ENCODE measurements at regions of chr3 and their contacts with region 1.

Region 1: DNA sequence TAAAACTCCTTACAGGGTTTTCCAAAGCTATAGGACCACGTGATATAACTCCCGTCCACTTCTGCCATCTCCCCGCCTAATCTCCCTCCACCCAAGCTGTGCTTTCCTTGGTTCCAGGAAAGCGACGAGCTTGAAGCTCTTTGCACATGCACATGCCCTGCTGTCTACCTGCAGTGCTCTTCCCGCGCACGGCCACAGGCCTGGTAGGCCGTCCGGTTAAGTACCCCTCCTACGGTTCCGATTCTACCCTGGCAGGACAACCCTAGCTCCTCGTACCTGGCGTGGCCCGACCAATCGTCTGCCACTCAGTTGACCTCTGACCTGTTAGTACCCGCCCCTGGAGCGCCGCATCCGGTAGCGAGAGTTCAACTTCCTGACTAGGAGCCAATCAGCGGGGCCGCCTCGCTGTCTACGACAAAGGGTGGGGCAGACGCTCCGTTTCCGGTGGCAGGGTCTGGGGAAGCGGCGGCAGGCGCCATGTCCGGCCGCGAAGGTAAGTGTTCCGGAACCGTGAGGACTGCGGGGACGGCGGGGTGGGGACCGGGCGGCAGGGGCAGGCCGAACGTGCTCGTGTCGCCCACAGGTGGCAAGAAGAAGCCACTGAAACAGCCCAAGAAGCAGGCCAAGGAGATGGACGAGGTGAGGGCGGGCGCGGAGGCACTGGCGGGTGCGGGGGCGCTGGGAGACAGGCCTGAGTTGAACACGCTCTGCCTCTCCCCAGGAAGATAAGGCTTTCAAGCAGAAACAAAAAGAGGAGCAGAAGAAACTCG is at the starts of genes CCDC51 and TMA7:
- DNase-seq: peak; percentile 99
- CTCF ChIP-seq: no peak

Region 2: GRCh38 chr3:48188266-48189201 is 251.5 kb before region 1 on chr3 and contains the start of gene CDC25A:
- CTCF ChIA-PET with region 1: interaction called, 52 read pairs
- POLR2A ChIA-PET with region 1: no interaction called
- DNase-seq: peak; percentile 99
- CTCF ChIP-seq: no peak

Region 3: DNA sequence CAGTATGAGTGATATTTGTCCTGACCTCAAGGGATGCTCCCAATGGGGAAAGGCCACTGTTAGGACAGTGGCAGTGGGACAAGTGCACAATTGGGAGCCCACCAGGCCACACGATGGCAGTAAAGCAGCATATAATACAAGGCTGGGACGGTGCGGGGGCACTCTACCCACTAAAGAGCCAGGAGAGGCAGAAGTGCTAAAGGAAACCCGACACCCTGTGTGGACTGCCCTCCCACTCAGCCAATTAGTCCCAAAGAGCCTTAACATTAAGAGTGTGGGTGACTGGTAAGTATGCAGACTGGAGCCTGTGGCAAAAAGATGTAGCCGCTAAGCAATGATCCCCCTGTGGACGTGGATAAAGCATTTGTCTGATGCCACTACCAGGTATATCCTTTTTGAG is 207.3 kb before region 1 on chr3:
- CTCF ChIA-PET with region 1: interaction called, 132 read pairs
- POLR2A ChIA-PET with region 1: no interaction called
- DNase-seq: peak; percentile 53
- CTCF ChIP-seq: peak; percentile 78

Region 4: DNA sequence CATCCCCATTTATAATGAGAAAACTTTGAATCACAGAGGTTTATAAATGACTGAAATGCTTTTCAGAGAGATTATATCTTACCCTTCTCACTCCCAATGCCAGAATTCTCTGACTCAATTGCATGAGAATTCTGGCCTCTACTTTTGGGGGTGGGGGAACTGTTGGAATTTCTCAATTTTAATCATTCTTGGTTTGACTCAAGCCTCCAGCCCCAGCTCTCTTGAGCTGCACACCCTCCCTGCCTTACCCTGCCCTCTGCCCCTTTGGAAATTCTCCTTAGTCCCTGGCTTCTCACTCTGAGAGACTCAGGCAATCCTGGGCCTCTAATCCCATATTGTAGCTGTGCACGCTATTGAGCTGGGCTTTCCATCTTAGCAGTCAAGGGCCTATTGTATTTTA is 154.9 kb before region 1 on chr3:
- CTCF ChIA-PET with region 1: interaction called, 27 read pairs
- POLR2A ChIA-PET with region 1: no interaction called
- DNase-seq: no peak
- CTCF ChIP-seq: no peak

Region 5: DNA sequence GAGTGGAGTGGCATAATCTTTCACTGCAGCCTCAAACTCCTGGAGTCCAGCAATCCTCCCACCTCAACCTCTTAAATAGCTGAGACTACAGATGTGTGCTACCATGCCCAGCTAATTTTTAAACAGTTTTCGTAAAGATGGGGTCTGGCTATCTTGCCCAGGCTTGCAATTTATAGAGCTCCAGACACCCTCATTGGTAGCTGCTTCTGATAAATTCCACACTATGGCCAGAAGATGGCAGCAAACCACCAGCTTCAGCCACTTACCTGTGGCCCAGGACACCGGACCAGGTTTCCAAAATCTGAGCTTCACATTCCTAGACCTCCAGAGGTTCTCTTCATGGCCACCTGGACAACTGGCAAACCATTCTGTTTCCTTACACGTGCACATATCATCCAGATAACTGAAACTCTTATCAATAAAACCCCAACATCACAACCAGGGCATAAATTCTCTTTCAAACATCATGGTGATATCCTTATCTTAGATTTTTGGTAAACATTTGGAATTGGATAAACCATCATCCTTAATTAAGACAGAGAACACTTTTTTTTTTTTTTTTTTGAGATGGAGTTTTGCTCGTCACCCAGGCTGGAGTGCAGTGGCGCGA is 39.1 kb before region 1 on chr3:
- CTCF ChIA-PET with region 1: interaction called, 863 read pairs
- POLR2A ChIA-PET with region 1: interaction called, 6 read pairs
- DNase-seq: peak; percentile 86
- CTCF ChIP-seq: peak; percentile 81

Region 6: DNA sequence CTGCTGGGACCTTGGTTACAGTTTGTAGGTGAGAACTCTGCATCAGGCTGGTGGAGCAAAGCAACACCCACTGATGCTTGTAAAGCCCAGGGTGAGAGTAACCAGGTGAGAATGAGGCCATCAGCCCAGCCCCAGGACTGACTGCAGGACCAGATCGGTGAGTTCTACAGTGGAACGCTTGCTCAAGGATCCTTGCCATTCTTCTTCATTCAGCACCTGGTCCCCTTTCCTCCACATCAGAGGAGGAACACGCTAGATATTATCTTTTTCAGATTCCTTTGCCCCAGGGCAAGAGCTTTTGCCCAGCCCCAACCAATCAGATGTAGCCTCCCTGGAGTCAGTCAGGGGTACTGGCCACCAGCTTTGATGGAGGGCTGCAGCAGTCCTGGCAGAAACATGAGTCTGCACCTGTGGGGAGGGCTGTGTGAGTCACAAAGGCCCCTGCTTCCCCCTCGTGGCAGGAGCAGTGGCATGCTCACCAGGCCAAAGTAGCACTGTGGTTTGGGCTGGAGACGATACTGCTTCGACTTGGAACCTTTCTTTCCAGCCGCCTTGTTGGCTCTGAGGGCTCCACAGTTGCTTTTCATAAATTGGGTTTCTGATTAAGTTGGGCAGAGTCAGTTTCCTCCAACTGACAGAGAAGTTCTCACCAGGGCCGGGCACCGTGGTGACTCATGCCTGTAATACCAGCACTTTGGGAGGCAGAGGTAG is 67.5 kb after region 1 on chr3:
- CTCF ChIA-PET with region 1: interaction called, 17 read pairs
- POLR2A ChIA-PET with region 1: no interaction called
- DNase-seq: peak; percentile 81
- CTCF ChIP-seq: peak; percentile 76

Region 7: GRCh38 chr3:48635222-48636021 is 195.4 kb after region 1 on chr3 and contains the start of gene SLC26A6:
- CTCF ChIA-PET with region 1: interaction called, 18 read pairs
- POLR2A ChIA-PET with region 1: no interaction called
- DNase-seq: peak; percentile 100
- CTCF ChIP-seq: peak; percentile 74

Measured in GM10248 (cell line).